ENCODE measurements at regions of chr12 and their contacts with region 1.

Region 1: DNA sequence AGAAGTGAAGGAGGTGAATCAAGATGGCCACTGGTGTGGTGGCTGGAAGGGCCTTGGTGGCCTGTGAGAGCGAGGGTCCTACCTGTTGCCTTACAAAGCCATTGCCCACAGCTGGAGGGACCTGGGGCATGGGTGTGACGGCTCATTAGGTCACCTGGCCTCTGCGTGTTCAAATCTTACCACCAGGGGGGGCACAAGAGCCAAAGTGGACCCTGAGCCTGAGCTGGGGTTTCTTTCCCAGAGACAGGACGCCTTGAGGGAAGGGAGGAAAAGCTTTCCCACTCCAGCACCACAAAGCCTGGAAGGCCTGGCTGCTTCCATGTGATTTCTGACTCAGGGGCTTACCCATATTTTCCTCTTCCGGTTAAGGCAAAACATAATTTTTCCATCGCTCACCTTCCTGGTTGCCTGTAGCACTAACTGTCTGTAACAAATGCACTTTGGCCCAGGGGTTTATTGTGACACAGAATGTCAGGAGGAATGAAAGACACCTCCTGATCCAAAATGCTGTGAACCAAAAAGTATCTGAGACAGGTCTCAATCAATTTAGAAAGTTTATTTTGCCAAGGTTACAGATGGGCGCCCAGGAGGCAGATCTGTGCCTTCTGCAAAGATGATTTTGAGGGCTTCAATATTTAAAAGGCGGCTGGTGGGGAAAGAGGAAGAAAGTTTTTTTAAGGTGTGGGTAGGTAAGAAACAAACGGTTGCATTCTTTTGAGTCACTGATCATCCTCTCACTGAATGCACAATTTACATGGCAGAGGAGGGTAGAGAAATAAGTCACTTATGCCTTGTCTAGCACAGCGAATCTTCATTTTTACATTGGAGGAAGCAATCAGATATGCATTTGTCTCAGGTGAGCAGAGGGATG is 4.3 kb upstream of the CD9 start:
- DNase-seq: peak; percentile 88
- H3K4me3 ChIP-seq: no peak overlapping the region
- H3K27ac ChIP-seq: peak overlapping the region; percentile 52
- H3K4me1 ChIP-seq: peaks cover 20% of the 10 kb centered on the region
- H3K27me3 ChIP-seq: no peaks in the 10 kb centered on the region
- CTCF ChIP-seq: peak; percentile 82 to 93

Region 2: DNA sequence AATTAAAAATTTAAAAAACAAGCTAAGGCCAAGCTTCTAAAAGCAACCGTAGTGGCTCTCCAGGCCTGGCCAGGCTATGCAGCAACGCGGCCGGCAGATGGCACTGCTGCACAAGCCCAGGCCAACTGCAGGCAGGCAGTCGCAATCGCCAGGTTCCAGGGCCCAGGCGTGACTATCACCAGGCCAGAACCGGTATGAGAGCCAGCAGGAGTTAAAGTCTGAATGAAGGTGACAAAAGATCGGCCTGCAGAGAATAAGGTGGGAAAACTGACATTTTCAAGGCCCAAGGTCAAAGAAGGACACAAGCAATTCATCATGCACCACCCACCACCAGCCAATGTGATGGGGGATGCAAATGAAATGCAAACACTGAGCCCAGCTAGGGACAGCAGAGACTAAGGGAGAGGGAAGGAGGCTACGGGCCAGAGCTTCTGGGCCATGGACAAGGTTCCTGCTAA is 207.2 kb before region 1 on chr12:
- CTCF ChIA-PET with region 1: no interaction called
- dilution Hi-C with region 1: loop called (anchors 10 kb)
- in situ Hi-C with region 1: no loop called
- intact Hi-C with region 1: loop called (anchors 10 kb)
- DNase-seq: peak; percentile 54
- H3K4me3 ChIP-seq: no peak overlapping the region
- H3K27ac ChIP-seq: no peak overlapping the region
- H3K4me1 ChIP-seq: no peaks in the 10 kb centered on the region
- H3K27me3 ChIP-seq: no peaks in the 10 kb centered on the region
- CTCF ChIP-seq: peak; percentile 97

Region 3: GRCh38 chr12:6062757-6063735 is 132.9 kb before region 1 on chr12:
- CTCF ChIA-PET with region 1: no interaction called
- dilution Hi-C with region 1: loop called (anchors 5 kb)
- in situ Hi-C with region 1: loop called (anchors 10 kb)
- intact Hi-C with region 1: loop called (anchors 1 kb)
- DNase-seq: peak; percentile 31
- H3K4me3 ChIP-seq: no peak overlapping the region
- H3K27ac ChIP-seq: no peak overlapping the region
- H3K4me1 ChIP-seq: no peaks in the 10 kb centered on the region
- H3K27me3 ChIP-seq: no peaks in the 10 kb centered on the region
- CTCF ChIP-seq: peak; percentile 96 to 97

Region 4: GRCh38 chr12:6230321-6231110 is 34.6 kb after region 1 on chr12:
- CTCF ChIA-PET with region 1: interaction called, 3 read pairs
- dilution Hi-C with region 1: loop called (anchors 5 kb)
- in situ Hi-C with region 1: no loop called
- intact Hi-C with region 1: loop called (anchors 1 kb)
- DNase-seq: peak; percentile 89
- H3K4me3 ChIP-seq: no peak overlapping the region
- H3K27ac ChIP-seq: peak overlapping the region; percentile 97
- H3K4me1 ChIP-seq: peaks cover 67% of the 10 kb centered on the region
- H3K27me3 ChIP-seq: no peaks in the 10 kb centered on the region
- CTCF ChIP-seq: no peak

Region 5: DNA sequence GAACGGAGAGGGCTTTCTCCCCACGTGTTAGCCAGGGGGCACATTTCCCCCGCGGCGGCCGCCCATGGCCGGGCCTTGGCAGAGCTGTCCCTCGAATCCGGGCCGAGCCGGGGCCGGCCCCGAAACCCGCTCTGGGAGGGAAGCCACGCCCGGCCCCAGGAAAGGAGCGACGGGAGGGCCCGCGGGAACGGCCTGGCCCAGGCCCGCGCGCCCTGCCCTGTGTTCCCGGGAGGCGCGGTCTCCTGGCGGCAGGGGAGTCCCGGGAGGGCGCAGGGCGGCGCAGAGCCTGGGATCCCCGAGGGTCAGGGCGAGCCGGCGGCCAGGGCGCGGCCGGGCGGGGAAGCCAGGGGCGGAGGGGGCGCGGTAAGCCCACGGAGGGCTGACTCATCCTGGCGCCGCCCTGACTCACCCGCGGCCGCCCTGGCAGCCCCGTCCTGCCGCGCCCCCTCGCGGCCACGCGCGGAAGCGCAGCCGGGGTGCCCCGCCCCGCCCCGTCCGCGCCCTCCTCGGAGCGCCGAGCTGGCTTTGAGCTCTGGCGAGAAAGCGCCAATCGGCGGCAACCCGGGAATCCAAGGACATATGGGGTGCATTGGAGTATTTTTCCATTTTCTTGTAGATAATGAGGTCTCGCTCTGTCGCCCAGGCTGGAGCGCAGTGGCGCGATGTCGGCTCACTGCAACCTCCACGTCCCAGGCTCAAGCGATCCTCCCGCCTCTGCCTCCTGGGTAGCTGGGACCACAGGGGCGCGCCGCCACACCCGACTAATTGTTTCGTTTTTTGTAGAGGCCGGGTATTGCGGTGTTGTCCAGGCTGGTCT is 82.7 kb after region 1 on chr12:
- CTCF ChIA-PET with region 1: interaction called, 8 read pairs
- dilution Hi-C with region 1: loop called (anchors 5 kb)
- in situ Hi-C with region 1: loop called in 1 of 2 experiments (anchors 5 kb)
- intact Hi-C with region 1: loop called (anchors 1 kb)
- DNase-seq: peak; percentile 93
- H3K4me3 ChIP-seq: peak overlapping the region; percentile 5 to 42 (median 38)
- H3K27ac ChIP-seq: peak overlapping the region; percentile 99
- H3K4me1 ChIP-seq: peaks cover 58% of the 10 kb centered on the region
- H3K27me3 ChIP-seq: no peaks in the 10 kb centered on the region
- CTCF ChIP-seq: peak; percentile 50 to 68

Measured in mammary epithelial cell (primary cell).